Posterior vena cava (tissue), 2 donors: ENCODE measurements at regions of chr5 and their contacts with region 1.

Region 1: GRCh38 chr5:59401637-59402036 is 491.9 kb downstream of the PDE4D start:
- DNase-seq: no peak

Region 2: DNA sequence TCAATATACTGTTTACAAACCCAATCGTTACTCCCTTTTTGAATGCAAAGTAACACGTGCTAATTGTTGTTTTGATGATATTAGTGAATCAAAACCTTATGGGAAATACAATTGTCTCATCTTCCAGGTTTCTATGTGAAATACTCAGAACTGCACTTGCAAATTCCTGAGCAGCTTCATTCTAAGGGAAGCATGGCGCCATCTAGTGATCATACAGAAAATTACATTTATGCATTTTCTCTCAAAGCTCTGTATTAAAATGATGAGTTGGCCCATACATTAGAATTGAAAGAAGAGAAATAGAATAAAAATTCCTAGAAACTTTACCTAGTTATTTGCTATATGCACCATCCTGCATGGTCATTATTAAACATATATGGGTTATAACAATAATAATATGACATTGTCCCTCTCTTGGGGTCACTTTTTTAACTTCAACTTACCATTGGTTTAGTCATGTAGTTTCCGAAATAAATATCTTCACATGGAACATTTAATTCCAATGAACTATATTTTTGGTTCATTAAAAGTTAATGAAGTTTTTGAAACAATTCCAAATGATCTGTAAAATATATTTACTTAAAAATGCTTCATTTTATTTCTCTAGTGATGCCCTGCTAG is 271.9 kb after region 1 on chr5:
- intact Hi-C with region 1: loop called in 1 of 2 experiments (anchors 10 kb)
- DNase-seq: no peak